Dorsolateral prefrontal cortex (tissue), 120 donors: ENCODE measurements at regions of chr6 and their contacts with region 1.

Region 1: DNA sequence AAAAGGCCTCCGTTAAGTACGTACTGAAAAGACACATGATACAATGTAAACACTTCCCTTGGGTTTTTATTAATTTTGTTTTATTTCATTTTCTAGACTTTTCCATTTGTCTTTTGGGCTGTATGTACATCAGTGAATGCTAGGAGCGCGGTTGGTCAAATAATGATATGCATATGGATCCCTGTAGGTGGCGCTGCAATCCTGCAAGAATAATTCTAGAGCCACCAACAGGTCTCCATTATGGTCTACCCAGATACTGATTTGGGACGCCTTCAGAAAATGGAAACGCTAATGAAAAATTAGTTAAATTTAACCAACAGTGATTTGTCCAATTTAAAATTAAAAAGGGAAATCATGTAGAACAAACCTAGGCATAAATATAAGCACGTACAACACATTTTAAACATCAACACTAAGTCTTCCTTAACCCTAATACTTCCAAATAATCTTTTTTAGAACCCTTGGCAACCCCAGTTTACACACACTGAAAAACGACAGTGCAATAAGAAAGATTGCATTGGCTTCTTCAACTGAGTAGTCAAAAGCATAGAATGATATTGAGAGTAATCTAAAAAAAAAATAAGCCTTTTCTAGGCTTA is 433.5 kb downstream of the RFPL4B start:
- DNase-seq: peak; percentile 22 to 80 (median 64)
- H3K4me3 ChIP-seq: peak overlapping the region in 6 of 59 donors; percentile 0 to 26 (median 17)
- H3K27ac ChIP-seq: no peak overlapping the region
- H3K27me3 ChIP-seq: no peaks in the 10 kb centered on the region
- CTCF ChIP-seq: peak; percentile 75 to 95 (median 90)

Region 2: GRCh38 chr6:113182370-113183141 is 402.0 kb after region 1 on chr6:
- intact Hi-C with region 1: loop called in 1 of 2 experiments (anchors 10 kb)
- DNase-seq: no peak
- H3K4me3 ChIP-seq: peak overlapping the region in 3 of 59 donors; percentile 2 to 4 (median 3)
- H3K27ac ChIP-seq: no peak overlapping the region
- H3K27me3 ChIP-seq: no peaks in the 10 kb centered on the region
- CTCF ChIP-seq: peak in 21 of 56 donors; percentile 7 to 49 (median 24)

Region 3: GRCh38 chr6:113909234-113909856 is 1128.7 kb after region 1 on chr6:
- intact Hi-C with region 1: loop called (anchors 5 to 10 kb)
- DNase-seq: peak in 1 of 10 donors; percentile 8
- H3K4me3 ChIP-seq: peak overlapping the region in 5 of 59 donors; percentile 11 to 30 (median 17)
- H3K27ac ChIP-seq: no peak overlapping the region
- H3K27me3 ChIP-seq: no peaks in the 10 kb centered on the region
- CTCF ChIP-seq: peak; percentile 60 to 96 (median 82)